ENCODE measurements at regions of chr14 and their contacts with region 1.

Region 1: DNA sequence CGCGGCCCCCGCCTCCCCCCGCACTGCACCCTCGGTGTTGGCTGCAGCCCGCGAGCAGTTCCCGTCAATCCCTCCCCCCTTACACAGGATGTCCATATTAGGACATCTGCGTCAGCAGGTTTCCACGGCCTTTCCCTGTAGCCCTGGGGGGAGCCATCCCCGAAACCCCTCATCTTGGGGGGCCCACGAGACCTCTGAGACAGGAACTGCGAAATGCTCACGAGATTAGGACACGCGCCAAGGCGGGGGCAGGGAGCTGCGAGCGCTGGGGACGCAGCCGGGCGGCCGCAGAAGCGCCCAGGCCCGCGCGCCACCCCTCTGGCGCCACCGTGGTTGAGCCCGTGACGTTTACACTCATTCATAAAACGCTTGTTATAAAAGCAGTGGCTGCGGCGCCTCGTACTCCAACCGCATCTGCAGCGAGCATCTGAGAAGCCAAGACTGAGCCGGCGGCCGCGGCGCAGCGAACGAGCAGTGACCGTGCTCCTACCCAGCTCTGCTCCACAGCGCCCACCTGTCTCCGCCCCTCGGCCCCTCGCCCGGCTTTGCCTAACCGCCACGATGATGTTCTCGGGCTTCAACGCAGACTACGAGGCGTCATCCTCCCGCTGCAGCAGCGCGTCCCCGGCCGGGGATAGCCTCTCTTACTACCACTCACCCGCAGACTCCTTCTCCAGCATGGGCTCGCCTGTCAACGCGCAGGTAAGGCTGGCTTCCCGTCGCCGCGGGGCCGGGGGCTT is at the start of gene FOS:
- DNase-seq: peak; percentile 83 to 97
- H3K4me3 ChIP-seq: peak within 1 kb of the TSS; percentile 88 to 89
- H3K27ac ChIP-seq: peak within 1 kb of the TSS; percentile 95 to 100
- H3K4me1 ChIP-seq: peaks cover 13 to 21% of the 10 kb centered on the region in 2 donors
- H3K27me3 ChIP-seq: no peaks in the 10 kb centered on the region
- CTCF ChIP-seq: peak in 1 of 3 experiments; percentile 38
- total RNA-seq, gene FOS: 4,268 TPM

Region 2: GRCh38 chr14:75165586-75166391 is 112.8 kb before region 1 on chr14:
- intact Hi-C with region 1: no loop called
- DNase-seq: no peak
- H3K4me3 ChIP-seq: peak overlapping the region; percentile 7
- H3K27ac ChIP-seq: peak overlapping the region; percentile 34 to 40
- H3K4me1 ChIP-seq: peaks cover 0 to 27% of the 10 kb centered on the region in 2 donors
- H3K27me3 ChIP-seq: no peaks in the 10 kb centered on the region
- CTCF ChIP-seq: no peak

Region 3: DNA sequence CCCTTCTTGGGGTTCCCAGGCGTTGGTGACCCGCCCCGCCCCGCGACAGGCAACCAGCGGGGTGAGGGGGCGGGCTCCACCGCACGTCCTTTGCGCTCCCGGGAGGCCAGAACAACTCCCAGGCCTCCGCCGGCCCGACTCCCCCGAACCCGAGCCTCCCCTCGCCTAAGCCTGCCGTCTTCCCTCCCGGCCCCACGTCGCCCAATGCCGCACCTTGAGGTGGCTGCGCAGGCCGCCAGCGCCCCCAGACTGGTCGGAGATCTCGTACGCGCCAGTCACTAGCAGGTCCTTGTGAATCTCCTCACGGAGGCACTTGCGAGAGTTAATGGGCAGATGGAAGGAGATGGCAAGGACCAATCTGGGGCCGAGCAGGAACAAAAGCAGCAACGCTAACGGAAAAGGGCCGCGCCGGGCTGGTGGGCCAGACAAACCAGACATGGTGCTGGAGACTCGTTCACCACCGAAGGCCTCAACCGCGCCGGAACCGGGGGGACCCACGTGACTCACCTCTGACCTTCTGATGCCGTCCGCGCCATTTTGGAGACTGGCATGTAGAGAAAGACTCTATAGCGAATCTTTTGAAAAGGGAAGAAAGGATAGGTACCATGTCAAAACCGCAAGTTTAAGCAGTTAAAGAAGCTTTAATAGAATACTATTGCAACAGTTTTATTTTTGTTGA is 102.3 kb before region 1 on chr14 and contains the start of gene TMED10:
- intact Hi-C with region 1: loop called (anchors 2 kb)
- DNase-seq: peak; percentile 55 to 92
- H3K4me3 ChIP-seq: peak within 1 kb of the TSS; percentile 92 to 97
- H3K27ac ChIP-seq: peak within 1 kb of the TSS; percentile 99 to 100
- H3K4me1 ChIP-seq: peaks cover 0 to 15% of the 10 kb centered on the region in 2 donors
- H3K27me3 ChIP-seq: no peaks in the 10 kb centered on the region
- CTCF ChIP-seq: peak in 1 of 3 experiments; percentile 10
- total RNA-seq, gene TMED10: 190 TPM

Region 4: DNA sequence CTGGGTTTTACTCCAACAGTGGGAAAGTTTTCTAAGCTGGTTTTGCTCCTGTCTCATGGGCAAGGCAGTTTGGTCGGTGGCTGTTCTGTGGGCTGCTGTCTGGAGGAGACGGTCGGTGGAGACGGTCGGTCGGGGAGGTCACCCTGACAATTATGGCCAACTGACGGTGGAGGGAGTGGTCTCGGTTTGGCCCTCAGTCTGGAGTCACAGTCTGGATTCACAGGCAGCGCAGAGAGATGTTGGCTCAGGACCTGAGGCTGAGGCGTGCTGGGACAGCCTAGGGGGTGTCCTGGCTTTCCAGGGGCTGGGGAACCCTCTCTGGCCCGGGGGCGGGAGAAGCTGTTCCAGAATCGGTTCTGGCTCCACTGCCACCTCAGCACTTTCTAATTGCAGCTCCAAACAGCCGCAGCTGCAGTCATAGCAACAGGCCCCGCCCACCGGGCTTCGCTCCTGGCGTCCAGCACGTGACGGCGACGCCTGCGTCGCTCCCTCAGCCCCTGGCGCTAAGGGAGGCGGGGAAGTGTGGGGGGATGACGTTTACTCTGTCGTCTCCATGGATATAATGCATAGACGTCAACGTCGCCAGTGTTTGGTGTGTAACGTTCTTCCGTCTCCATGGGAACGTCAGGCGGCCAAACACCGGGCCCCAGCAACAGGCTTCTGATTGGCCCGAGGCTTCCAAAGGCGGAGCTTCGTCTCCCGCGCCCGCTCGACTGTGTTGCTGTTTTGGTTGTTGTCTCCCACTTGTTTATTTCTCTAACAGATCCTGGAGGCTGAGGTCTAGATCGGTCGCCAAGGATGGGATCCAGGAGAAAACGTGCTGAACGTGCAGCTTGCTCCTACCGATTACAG is 19.8 kb before region 1 on chr14:
- intact Hi-C with region 1: loop called (anchors 1 kb)
- DNase-seq: peak; percentile 97 to 100
- H3K4me3 ChIP-seq: peak overlapping the region; percentile 46 to 62
- H3K27ac ChIP-seq: peak overlapping the region; percentile 93 to 97
- H3K4me1 ChIP-seq: peaks cover 0 to 32% of the 10 kb centered on the region in 2 donors
- H3K27me3 ChIP-seq: no peaks in the 10 kb centered on the region
- CTCF ChIP-seq: no peak

Region 5: GRCh38 chr14:75267141-75267721 is 11.4 kb before region 1 on chr14:
- intact Hi-C with region 1: loop called (anchors 1 kb)
- DNase-seq: no peak
- H3K4me3 ChIP-seq: no peak overlapping the region
- H3K27ac ChIP-seq: peak overlapping the region; percentile 87 to 89
- H3K4me1 ChIP-seq: peaks cover 8 to 25% of the 10 kb centered on the region in 2 donors
- H3K27me3 ChIP-seq: no peaks in the 10 kb centered on the region
- CTCF ChIP-seq: no peak

Region 6: GRCh38 chr14:75452900-75453747 is 174.5 kb after region 1 on chr14:
- intact Hi-C with region 1: no loop called
- DNase-seq: peak in 1 of 2 donors; percentile 81
- H3K4me3 ChIP-seq: peak overlapping the region in 1 of 2 donors; percentile 8
- H3K27ac ChIP-seq: peak overlapping the region; percentile 69 to 85
- H3K4me1 ChIP-seq: peaks cover 40 to 78% of the 10 kb centered on the region in 2 donors
- H3K27me3 ChIP-seq: no peaks in the 10 kb centered on the region
- CTCF ChIP-seq: no peak

Measured in ascending aorta (tissue), 2 donors.